PC-9 (cell line): ENCODE measurements at regions of chr12 and their contacts with region 1.

Region 1: GRCh38 chr12:47270782-47271664 is 191.3 kb upstream of the AMIGO2 start:
- DNase-seq: peak; percentile 70 to 99
- H3K4me3 ChIP-seq: peak overlapping the region; percentile 41; the same call in 1 of the 2 replicates
- H3K27ac ChIP-seq: peak overlapping the region; percentile 100
- H3K4me1 ChIP-seq: peaks cover 76% of the 10 kb centered on the region
- H3K27me3 ChIP-seq: no peaks in the 10 kb centered on the region
- CTCF ChIP-seq: no peak

Region 2: GRCh38 chr12:45898094-45898493 is 1372.9 kb before region 1 on chr12:
- CTCF ChIA-PET with region 1: no interaction called
- POLR2A ChIA-PET with region 1: no interaction called
- intact Hi-C with region 1: no loop called
- DNase-seq: no peak
- H3K4me3 ChIP-seq: no peak overlapping the region
- H3K27ac ChIP-seq: no peak overlapping the region
- H3K4me1 ChIP-seq: no peaks in the 10 kb centered on the region
- H3K27me3 ChIP-seq: no peaks in the 10 kb centered on the region
- CTCF ChIP-seq: no peak

Region 3: GRCh38 chr12:46915082-46915481 is 355.9 kb before region 1 on chr12:
- CTCF ChIA-PET with region 1: no interaction called
- POLR2A ChIA-PET with region 1: no interaction called
- intact Hi-C with region 1: no loop called
- DNase-seq: peak in 1 of 2 experiments; percentile 23
- H3K4me3 ChIP-seq: no peak overlapping the region
- H3K27ac ChIP-seq: no peak overlapping the region
- H3K4me1 ChIP-seq: no peaks in the 10 kb centered on the region
- H3K27me3 ChIP-seq: no peaks in the 10 kb centered on the region
- CTCF ChIP-seq: no peak

Region 4: DNA sequence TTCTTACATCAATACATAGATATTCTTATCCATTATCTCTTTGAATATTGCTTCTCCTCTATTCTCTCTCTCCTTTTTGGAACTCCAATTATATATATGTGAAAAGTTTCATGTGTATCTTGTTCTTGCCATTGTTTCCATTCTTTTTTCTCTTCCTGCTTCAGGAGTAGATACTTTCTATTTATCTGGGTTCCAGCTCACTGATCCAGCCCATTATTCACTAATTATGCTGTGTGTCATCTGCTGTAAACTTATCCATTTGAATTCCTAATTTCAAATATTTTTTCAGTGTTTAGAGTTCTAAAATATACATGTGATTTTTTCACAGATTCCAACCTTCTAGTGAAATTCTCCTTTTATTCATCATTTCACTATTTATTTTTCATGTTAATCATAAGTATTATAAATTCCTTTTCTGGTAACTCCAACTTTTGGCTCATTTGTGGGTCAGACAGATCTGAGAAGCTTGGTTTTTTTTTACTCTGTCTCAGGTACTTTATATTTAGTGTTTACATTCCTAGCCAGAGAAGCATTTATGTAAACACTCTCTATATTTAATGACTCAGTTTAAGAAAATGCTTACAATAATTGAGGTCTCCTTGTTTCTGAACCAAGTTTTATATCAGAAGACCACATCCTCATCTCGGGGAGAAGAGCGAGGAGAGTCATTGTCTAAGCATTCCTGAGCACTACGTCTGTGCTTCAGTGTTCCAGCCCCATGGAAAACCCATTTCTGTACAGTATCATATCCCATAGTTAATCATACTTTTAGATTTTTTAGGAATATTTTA is 175.4 kb before region 1 on chr12:
- CTCF ChIA-PET with region 1: no interaction called
- POLR2A ChIA-PET with region 1: interaction called, 4 read pairs
- intact Hi-C with region 1: loop called (anchors 2 kb)
- DNase-seq: peak; percentile 34 to 84
- H3K4me3 ChIP-seq: no peak overlapping the region; the same call in 1 of the 2 replicates
- H3K27ac ChIP-seq: peak overlapping the region; percentile 71
- H3K4me1 ChIP-seq: peaks cover 49% of the 10 kb centered on the region
- H3K27me3 ChIP-seq: no peaks in the 10 kb centered on the region
- CTCF ChIP-seq: no peak

Region 5: DNA sequence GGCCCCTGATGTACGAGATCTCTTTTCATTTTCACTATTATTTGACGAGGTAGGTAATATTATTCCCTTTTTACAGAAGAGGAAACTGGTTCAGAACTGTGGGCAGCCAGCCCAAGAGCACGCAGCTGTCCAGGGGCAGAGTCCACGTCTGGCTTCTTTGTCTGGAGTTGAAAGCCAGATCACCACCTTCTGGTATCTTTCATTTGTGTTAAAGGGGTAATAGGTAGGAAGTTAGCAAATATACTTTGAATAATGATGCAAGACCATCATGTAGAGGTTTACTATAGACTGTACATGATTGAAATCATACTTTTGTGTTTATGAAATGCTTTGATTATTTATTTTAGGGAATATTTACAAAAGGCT is 47.2 kb before region 1 on chr12:
- CTCF ChIA-PET with region 1: interaction called, 4 read pairs
- POLR2A ChIA-PET with region 1: interaction called, 5 read pairs
- intact Hi-C with region 1: loop called (anchors 1 kb)
- DNase-seq: no peak
- H3K4me3 ChIP-seq: no peak overlapping the region
- H3K27ac ChIP-seq: no peak overlapping the region
- H3K4me1 ChIP-seq: peaks cover 42% of the 10 kb centered on the region
- H3K27me3 ChIP-seq: no peaks in the 10 kb centered on the region
- CTCF ChIP-seq: no peak

Region 6: GRCh38 chr12:47307680-47308399 is 36.8 kb after region 1 on chr12:
- CTCF ChIA-PET with region 1: no interaction called
- POLR2A ChIA-PET with region 1: no interaction called
- intact Hi-C with region 1: loop called (anchors 1 kb)
- DNase-seq: peak; percentile 55 to 56
- H3K4me3 ChIP-seq: no peak overlapping the region
- H3K27ac ChIP-seq: peak overlapping the region; percentile 24
- H3K4me1 ChIP-seq: peaks cover 5% of the 10 kb centered on the region; the same call in 1 of the 2 replicates
- H3K27me3 ChIP-seq: no peaks in the 10 kb centered on the region
- CTCF ChIP-seq: peak; percentile 74